Calu3 (cell line): ENCODE measurements at regions of chr1 and their contacts with region 1.

Region 1: DNA sequence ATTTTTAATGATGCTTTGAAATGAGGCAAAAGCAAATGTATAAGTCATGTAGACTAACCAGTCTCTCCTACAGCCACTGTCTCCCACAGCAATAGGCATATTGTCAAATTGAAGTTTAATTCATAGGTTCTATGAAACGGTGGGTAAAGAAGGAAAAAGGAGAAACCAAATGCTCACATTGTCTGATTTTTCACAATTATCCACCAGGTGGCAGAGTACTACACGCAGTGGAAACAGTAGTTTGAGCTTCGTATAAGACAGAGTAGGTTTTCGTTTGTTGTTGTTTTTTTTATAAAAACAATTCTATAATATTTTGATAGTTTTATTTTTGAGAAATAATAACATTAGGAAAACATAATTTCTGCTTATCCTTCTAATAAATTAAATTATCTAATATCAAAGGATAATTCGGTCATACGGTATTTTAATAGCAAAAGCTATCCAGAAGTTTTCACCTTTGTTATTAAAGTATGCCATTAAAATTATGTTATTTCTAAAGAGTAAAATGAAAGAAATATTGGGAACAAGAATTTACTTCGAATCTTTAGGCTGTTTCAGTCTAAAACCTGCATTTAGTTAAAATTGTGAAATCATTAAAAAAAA is 39.1 kb downstream of the TYW3 start:
- DNase-seq: peak; percentile 44
- H3K4me3 Mint-ChIP-seq: no peak overlapping the region
- H3K27ac Mint-ChIP-seq: no peak overlapping the region
- H3K4me1 Mint-ChIP-seq: no peaks in the 10 kb centered on the region
- H3K27me3 Mint-ChIP-seq: no peaks in the 10 kb centered on the region
- CTCF ChIP-seq: peak; percentile 53

Region 2: GRCh38 chr1:74964508-74965102 is 192.6 kb after region 1 on chr1:
- CTCF ChIA-PET with region 1: no interaction called
- intact Hi-C with region 1: loop called (anchors 10 kb)
- DNase-seq: peak; percentile 46
- H3K4me3 Mint-ChIP-seq: no peak overlapping the region
- H3K27ac Mint-ChIP-seq: no peak overlapping the region
- H3K4me1 Mint-ChIP-seq: no peaks in the 10 kb centered on the region
- H3K27me3 Mint-ChIP-seq: no peaks in the 10 kb centered on the region
- CTCF ChIP-seq: no peak